ENCODE measurements at regions of chr6 and their contacts with region 1.

Region 1: DNA sequence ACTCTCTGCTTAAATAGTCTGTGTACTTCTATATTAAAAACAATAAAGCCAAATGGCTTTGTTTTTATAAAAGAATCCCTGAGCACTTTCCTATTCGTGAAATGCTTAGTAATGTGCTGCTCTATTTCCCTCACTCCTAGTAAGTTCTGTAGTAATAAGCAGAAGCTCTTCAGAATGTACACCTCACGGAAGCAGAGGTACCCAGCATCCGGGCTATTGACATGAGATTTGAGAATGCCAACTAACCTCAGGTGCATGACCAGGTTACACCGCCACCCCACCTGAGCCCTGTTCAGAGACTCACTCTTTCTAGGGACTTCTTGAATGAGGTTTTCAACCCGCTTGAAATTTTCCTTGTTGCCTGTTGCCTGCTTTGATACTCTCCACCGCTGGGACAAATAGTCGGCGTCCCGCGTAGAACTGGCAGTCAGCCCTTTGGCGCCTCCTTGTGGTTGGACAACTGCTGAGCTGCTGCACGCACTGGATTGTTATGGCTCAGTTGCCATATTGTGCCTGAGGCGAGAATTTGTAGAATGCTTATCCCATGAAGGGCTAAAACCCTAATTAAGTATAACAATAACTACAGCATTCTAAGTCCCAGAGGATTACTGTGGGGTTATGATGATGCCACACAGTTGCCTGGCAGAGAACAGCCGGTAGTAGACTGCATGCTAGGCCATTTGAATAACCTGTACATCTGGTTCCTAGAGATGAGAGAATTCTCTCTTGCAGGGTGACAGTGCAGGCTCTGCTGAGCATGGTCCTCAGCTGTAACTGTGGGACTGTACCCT is 95.4 kb downstream of the KHDC1L start:
- DNase-seq: peak; percentile 54 to 85
- ATAC-seq: peak; percentile 74

Region 2: DNA sequence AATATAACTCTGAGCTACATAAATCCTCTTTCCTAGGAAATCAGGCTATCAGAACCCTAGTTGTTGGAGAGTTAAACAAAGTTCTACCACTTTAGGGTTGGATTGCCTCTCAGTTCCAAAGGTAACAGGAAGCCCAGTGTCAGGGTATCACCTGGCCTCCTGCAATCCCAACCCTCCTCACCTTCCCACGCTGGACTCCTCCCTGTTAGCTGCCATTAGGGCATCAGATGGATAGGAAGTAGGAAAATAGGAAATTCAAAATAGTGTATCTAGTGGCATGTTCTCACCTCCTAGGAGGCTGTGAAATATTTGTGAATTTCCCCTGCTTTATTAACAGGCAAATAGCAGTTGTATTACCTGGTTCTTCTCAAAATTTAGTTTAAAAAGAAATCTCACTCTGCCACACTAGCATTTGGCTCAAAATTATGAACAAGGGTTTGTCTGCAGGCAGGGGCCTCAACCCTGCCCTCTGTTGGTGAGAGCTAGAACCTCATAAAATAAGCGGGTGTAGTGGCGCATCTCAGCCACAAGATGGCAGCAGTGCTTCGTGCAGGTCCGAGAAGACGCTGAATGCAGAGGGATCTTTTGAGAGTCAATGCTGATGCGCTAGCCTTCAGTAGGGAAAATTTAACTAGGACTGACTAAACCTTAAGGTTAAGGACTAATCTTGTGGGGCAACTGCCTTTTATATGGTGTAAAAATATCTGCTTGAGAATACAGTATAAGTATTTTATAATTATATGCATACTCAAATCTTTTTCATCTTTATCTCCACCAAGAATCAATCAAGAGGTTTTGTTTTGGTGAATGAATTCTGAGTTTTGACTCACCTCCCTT is 717.8 kb before region 1 on chr6:
- intact Hi-C with region 1: loop called in 1 of 2 experiments (anchors 5 kb)
- DNase-seq: peak; percentile 35 to 65
- ATAC-seq: peak; percentile 81

Region 3: GRCh38 chr6:72841195-72841594 is 288.7 kb before region 1 on chr6:
- intact Hi-C with region 1: no loop called
- DNase-seq: no peak
- ATAC-seq: no peak

Region 4: GRCh38 chr6:72873433-72873832 is 256.4 kb before region 1 on chr6:
- intact Hi-C with region 1: no loop called
- DNase-seq: no peak
- ATAC-seq: no peak

Measured in left colon (tissue), 2 donors.